Heart left ventricle (tissue), 16 donors: ENCODE measurements at regions of chr1 and their contacts with region 1.

Region 1: GRCh38 chr1:155859234-155859829 is at the start of gene SYT11:
- DNase-seq: peak; percentile 95 to 97 (median 96)
- ATAC-seq: peak; percentile 83 to 92 (median 90)
- H3K4me3 ChIP-seq: peak within 1 kb of the TSS; percentile 2 to 67 (median 56)
- H3K27ac ChIP-seq: peak within 1 kb of the TSS; percentile 78 to 97 (median 92)
- H3K4me1 ChIP-seq: peaks cover 0 to 49% (median 25%) of the 10 kb centered on the region in 12 donors
- H3K27me3 ChIP-seq: no peaks in the 10 kb centered on the region
- CTCF ChIP-seq: peak in 5 of 12 donors; percentile 10 to 46 (median 27)
- POLR2A ChIP-seq: peak in 1 of 2 donors; percentile 22
- total RNA-seq, gene SYT11: 10.7 to 26.3 (median 16.0) TPM

Region 2: GRCh38 chr1:155893389-155894142 is 34.2 kb after region 1 on chr1:
- intact Hi-C with region 1: loop called in 1 of 10 experiments (anchors 2 kb)
- DNase-seq: peak in 1 of 5 donors; percentile 46
- ATAC-seq: peak; percentile 68 to 93 (median 79)
- H3K4me3 ChIP-seq: no peak overlapping the region
- H3K27ac ChIP-seq: peak overlapping the region; percentile 55 to 86 (median 79)
- H3K4me1 ChIP-seq: peaks cover 0 to 34% (median 13%) of the 10 kb centered on the region in 12 donors
- H3K27me3 ChIP-seq: no peaks in the 10 kb centered on the region
- CTCF ChIP-seq: no peak
- POLR2A ChIP-seq: no peak

Region 3: DNA sequence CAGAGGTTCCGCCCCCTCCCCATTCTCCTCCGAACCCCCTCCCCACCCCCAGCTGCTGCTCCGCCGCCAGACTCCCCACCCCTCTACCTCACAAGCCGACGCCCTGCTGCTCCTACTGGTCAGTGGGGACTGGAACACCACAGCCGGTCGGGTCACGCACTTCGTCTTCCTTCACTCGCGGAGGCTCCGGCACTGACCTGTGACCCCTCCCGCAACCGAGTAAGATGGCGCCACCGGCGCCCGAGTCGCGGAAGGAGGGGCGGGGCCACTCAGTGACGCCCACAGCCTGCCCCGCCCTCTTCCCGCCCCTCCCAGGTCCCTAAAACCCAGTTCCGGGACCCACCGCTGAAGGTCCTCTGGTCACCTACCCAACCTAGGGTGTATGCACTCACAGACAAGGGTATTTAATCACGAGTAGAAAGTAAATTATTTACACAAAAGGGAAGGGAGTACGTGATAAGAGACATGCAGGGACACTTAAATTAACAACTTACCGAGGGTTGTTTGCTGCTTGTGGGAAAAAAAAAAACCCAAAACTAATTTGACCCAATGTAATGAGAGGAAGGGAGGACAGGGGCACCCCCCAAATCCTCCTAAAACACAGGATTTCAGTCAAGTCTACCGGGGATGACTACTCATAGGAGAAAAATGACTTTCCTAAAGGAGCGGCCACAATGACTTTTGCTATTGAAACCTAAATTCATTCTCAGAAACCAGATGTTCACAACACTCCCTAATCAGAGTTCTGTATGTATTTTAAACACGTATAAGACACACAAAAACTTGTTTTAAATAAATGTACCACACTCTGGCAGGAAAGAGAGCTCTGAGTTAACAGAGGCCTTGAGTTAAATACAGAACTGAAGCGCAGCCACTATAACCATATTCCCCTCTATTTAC is 52.1 kb after region 1 on chr1 and contains the start of gene RIT1:
- intact Hi-C with region 1: loop called in 6 of 10 experiments (anchors 2 to 5 kb)
- DNase-seq: peak; percentile 90 to 94 (median 91)
- ATAC-seq: peak; percentile 97 to 99 (median 99)
- H3K4me3 ChIP-seq: peak within 1 kb of the TSS; percentile 65 to 97 (median 80)
- H3K27ac ChIP-seq: peak within 1 kb of the TSS; percentile 80 to 95 (median 92)
- H3K4me1 ChIP-seq: peaks cover 0 to 22% (median 10%) of the 10 kb centered on the region in 12 donors
- H3K27me3 ChIP-seq: no peaks in the 10 kb centered on the region
- CTCF ChIP-seq: peak in 2 of 12 donors; percentile 4 to 13
- POLR2A ChIP-seq: peak in 1 of 2 donors; percentile 63
- total RNA-seq, gene RIT1: 15.1 to 33.3 (median 20.0) TPM

Region 4: GRCh38 chr1:155989242-155990004 is 130.1 kb after region 1 on chr1:
- intact Hi-C with region 1: loop called in 1 of 10 experiments (anchors 10 kb)
- DNase-seq: peak; percentile 75 to 88 (median 78)
- ATAC-seq: peak; percentile 83 to 94 (median 92)
- H3K4me3 ChIP-seq: peak overlapping the region in 10 of 12 donors; percentile 25 to 62 (median 48)
- H3K27ac ChIP-seq: peak overlapping the region in 10 of 12 donors; percentile 12 to 90 (median 55)
- H3K4me1 ChIP-seq: peaks cover 0 to 37% (median 10%) of the 10 kb centered on the region in 12 donors
- H3K27me3 ChIP-seq: no peaks in the 10 kb centered on the region
- CTCF ChIP-seq: peak; percentile 96 to 100 (median 98)
- POLR2A ChIP-seq: no peak